ENCODE measurements at regions of chr9 and their contacts with region 1.

Region 1: DNA sequence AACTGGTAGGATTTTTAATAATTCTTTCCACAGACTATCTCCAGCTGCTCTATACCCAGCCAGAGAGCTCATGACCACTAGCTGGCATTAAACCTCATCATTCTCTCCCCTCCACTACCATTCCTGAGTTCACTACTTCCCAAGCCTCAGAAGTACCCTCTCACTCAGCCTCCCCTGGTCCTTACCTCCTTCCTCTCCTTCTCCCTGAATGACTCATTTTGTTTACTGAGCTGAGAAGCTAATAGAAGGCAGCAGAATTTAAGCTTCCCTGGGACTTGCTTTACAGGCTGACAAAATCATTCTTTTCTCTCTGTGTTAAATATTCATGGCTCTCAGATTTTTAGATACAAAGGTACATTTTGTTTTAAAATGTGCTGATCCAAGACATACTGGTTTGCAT is 305.4 kb downstream of the TLR4 start:
- DNase-seq: no peak
- H3K4me3 ChIP-seq: no peak overlapping the region
- CTCF ChIP-seq: no peak
- POLR2A ChIP-seq: no peak

Region 2: GRCh38 chr9:118809160-118809625 is 799.6 kb after region 1 on chr9:
- intact Hi-C with region 1: loop called (anchors 5 kb)
- DNase-seq: no peak
- H3K4me3 ChIP-seq: no peak overlapping the region
- CTCF ChIP-seq: no peak
- POLR2A ChIP-seq: no peak

Measured in lower leg skin (tissue), 4 donors.